ENCODE measurements at regions of chr3 and their contacts with region 1.

Region 1: GRCh38 chr3:4978204-4978965 is 852 bp upstream of the BHLHE40 start:
- DNase-seq: peak; percentile 98
- ATAC-seq: peak; percentile 57
- H3K4me3 Mint-ChIP-seq: peak overlapping the region; percentile 92
- H3K27ac Mint-ChIP-seq: peak overlapping the region; percentile 96
- H3K4me1 Mint-ChIP-seq: peaks cover 34% of the 10 kb centered on the region
- H3K27me3 Mint-ChIP-seq: no peaks in the 10 kb centered on the region
- CTCF ChIP-seq: no peak

Region 2: DNA sequence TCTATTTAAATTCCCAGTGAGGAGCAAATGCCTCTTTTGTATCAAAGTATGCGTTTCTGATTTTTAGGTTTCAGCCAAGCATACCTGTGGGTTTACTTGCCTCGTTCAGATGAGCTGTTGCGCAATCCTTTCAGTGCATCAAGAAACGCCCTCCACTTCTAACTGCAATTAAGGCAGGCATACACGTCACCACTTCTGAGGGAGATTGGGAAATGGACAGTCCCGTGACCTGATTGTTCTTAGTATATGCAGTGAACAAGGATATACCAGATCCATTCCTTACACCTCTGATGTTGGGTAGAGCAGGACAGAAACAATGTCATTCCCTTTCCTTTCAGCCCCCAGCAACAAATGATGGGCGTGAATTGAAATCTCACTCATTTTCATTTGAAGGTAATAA is 266.2 kb before region 1 on chr3:
- CTCF ChIA-PET with region 1: interaction called, 148 read pairs
- POLR2A ChIA-PET with region 1: interaction called, 11 read pairs
- intact Hi-C with region 1: no loop called
- DNase-seq: no peak
- ATAC-seq: no peak
- H3K4me3 Mint-ChIP-seq: no peak overlapping the region
- H3K27ac Mint-ChIP-seq: no peak overlapping the region
- H3K4me1 Mint-ChIP-seq: peaks cover 11% of the 10 kb centered on the region
- H3K27me3 Mint-ChIP-seq: no peaks in the 10 kb centered on the region
- CTCF ChIP-seq: no peak

Region 3: DNA sequence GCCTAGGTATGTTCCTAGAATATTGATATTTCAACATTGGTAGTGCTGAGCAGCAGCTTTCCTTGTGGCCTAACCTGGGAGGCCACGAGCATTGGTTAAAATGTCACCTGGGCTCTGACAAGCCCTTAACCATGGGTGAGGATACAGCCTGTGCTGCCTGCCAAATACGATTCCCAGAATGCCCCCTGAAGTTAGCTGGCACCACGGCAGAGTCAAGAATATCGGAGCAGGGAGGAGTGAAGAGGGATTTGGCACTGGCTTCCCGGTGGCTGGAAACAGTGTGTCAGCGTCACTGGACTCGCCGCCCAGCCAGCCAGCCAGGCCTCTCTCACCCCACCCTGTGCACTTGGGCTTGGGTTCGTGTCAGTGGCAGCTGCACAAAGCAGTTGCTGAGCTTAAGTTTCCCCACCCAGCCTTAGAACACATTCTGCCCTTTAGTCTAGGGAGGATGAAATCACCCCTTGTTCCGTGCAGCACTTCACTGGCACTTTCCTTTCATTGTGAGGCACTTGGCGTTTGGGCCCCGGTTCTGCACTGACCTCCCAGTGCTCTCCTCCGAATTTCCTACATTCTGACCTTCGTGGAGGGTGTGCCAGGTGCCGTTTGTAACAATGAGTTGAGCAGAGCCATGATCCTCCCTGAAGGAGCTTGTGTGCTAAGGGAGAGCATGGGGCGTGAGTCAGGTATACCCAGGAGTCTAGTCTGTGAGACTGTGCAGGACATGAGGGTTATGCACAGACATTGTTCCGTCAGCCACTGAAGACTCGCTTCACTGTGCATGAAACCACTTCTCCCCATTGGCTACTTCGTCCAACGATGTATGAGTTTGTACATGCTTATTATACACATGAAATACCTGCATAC is 151.9 kb before region 1 on chr3:
- CTCF ChIA-PET with region 1: interaction called, 135 read pairs
- POLR2A ChIA-PET with region 1: interaction called, 434 read pairs
- intact Hi-C with region 1: loop called (anchors 1 kb)
- DNase-seq: no peak
- ATAC-seq: no peak
- H3K4me3 Mint-ChIP-seq: peak overlapping the region; percentile 68
- H3K27ac Mint-ChIP-seq: peak overlapping the region; percentile 100
- H3K4me1 Mint-ChIP-seq: peaks cover 95% of the 10 kb centered on the region
- H3K27me3 Mint-ChIP-seq: no peaks in the 10 kb centered on the region
- CTCF ChIP-seq: no peak

Region 4: DNA sequence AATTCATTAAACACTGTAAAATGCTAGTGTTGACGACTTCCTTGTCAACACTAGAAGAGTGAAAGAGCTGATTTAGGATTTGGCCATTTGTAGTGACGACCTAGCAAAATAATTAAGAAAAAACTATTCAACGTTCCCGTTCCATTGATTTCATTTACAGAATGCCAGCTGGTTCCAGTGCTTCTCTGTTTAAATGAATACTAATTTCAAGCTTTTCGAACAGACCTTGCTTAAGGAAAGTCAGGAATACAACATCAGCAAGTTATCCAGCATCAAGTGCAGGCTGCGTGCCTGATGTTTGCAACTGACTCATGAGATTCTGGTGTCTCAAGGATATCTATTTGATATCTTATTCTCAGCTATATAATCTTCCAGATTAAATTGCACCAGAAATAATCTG is 97.5 kb before region 1 on chr3:
- CTCF ChIA-PET with region 1: interaction called, 11 read pairs
- POLR2A ChIA-PET with region 1: interaction called, 3 read pairs
- intact Hi-C with region 1: no loop called
- DNase-seq: no peak
- ATAC-seq: no peak
- H3K4me3 Mint-ChIP-seq: no peak overlapping the region
- H3K27ac Mint-ChIP-seq: no peak overlapping the region
- H3K4me1 Mint-ChIP-seq: peaks cover 31% of the 10 kb centered on the region
- H3K27me3 Mint-ChIP-seq: no peaks in the 10 kb centered on the region
- CTCF ChIP-seq: no peak

Region 5: DNA sequence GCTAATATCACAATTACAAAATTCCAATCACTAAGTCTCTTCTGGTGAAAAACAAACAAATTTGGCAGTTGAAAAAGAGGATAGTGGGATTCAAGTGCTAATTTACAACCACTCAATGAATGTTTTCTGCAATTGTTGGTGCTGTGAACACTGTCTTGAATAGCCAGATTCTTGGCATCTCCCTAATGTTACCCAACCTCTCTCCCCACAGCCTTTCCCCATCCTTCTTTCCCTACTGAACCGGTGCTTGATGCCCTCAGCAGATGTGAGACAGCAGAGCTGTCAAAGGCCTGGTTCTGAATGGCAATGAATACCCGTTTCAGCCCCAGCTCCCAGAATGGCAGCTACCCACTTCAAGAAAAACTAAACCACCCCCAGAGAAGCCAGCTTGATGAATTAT is 21.6 kb before region 1 on chr3:
- CTCF ChIA-PET with region 1: interaction called, 15 read pairs
- POLR2A ChIA-PET with region 1: interaction called, 4 read pairs
- intact Hi-C with region 1: no loop called
- DNase-seq: no peak
- ATAC-seq: no peak
- H3K4me3 Mint-ChIP-seq: no peak overlapping the region
- H3K27ac Mint-ChIP-seq: no peak overlapping the region
- H3K4me1 Mint-ChIP-seq: no peaks in the 10 kb centered on the region
- H3K27me3 Mint-ChIP-seq: no peaks in the 10 kb centered on the region
- CTCF ChIP-seq: no peak

Region 6: DNA sequence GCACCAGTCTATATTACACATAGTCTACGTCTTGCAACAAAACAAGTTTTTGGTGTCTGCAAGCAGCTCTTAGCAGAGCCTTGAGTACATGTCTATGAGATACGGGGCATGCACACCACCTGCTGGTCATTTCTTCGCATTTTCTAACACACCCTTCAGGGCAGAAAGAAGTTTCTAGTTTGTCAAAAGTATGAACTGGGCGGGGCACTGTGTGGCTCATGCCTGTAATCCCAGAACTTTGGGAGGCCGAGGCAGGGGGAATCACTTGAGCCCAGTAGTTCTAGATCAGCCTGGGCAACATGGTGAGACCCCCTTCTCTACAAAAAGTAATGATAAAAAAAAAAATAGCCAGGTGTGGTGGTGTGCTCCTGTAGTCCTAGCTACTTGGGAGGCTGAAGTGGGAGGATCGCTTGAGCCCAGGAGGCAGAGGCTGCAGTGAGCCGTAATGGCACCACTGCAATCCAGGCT is 79.5 kb after region 1 on chr3:
- CTCF ChIA-PET with region 1: interaction called, 31 read pairs
- POLR2A ChIA-PET with region 1: interaction called, 31 read pairs
- intact Hi-C with region 1: no loop called
- DNase-seq: peak; percentile 93
- ATAC-seq: peak; percentile 95
- H3K4me3 Mint-ChIP-seq: no peak overlapping the region
- H3K27ac Mint-ChIP-seq: no peak overlapping the region
- H3K4me1 Mint-ChIP-seq: peaks cover 32% of the 10 kb centered on the region
- H3K27me3 Mint-ChIP-seq: peaks cover 11% of the 10 kb centered on the region
- CTCF ChIP-seq: peak; percentile 86

Measured in activated CD8-positive, alpha-beta T cell treated with anti-CD3 and anti-CD28 coated beads for 36 hours (primary cell).